Natural killer cell (primary cell): ENCODE measurements at regions of chr9 and their contacts with region 1.

Region 1: GRCh38 chr9:131678499-131679111 is 61.3 kb downstream of the RAPGEF1 start:
- DNase-seq: peak; percentile 75 to 83
- ATAC-seq: peak; percentile 93 to 97 (median 97)
- H3K4me3 ChIP-seq: no peak overlapping the region
- H3K4me3 Mint-ChIP-seq: peak overlapping the region; percentile 86
- H3K27ac ChIP-seq: peak overlapping the region; percentile 89
- H3K27ac Mint-ChIP-seq: peak overlapping the region; percentile 99 to 100
- H3K4me1 ChIP-seq: peaks cover 54% of the 10 kb centered on the region
- H3K4me1 Mint-ChIP-seq: peaks cover 83 to 93% of the 10 kb centered on the region in 2 donors
- H3K27me3 ChIP-seq: no peaks in the 10 kb centered on the region
- H3K27me3 Mint-ChIP-seq: no peaks in the 10 kb centered on the region
- CTCF ChIP-seq: no peak

Region 2: GRCh38 chr9:130718562-130718961 is 960.0 kb before region 1 on chr9:
- intact Hi-C with region 1: no loop called
- DNase-seq: no peak
- ATAC-seq: no peak
- H3K4me3 ChIP-seq: no peak overlapping the region
- H3K4me3 Mint-ChIP-seq: no peak overlapping the region
- H3K27ac ChIP-seq: no peak overlapping the region
- H3K27ac Mint-ChIP-seq: no peak overlapping the region
- H3K4me1 ChIP-seq: peaks cover 8% of the 10 kb centered on the region
- H3K4me1 Mint-ChIP-seq: peaks cover 36 to 43% of the 10 kb centered on the region in 2 donors
- H3K27me3 ChIP-seq: no peaks in the 10 kb centered on the region
- H3K27me3 Mint-ChIP-seq: no peaks in the 10 kb centered on the region
- CTCF ChIP-seq: no peak

Region 3: GRCh38 chr9:131590908-131591844 is 87.4 kb before region 1 on chr9:
- intact Hi-C with region 1: loop called (anchors 5 kb)
- DNase-seq: peak; percentile 79 to 88
- ATAC-seq: peak; percentile 92 to 96 (median 94)
- H3K4me3 ChIP-seq: no peak overlapping the region
- H3K4me3 Mint-ChIP-seq: peak overlapping the region; percentile 63
- H3K27ac ChIP-seq: peak overlapping the region; percentile 21
- H3K27ac Mint-ChIP-seq: peak overlapping the region; percentile 81 to 89
- H3K4me1 ChIP-seq: peaks cover 23% of the 10 kb centered on the region
- H3K4me1 Mint-ChIP-seq: peaks cover 33 to 41% of the 10 kb centered on the region in 2 donors
- H3K27me3 ChIP-seq: no peaks in the 10 kb centered on the region
- H3K27me3 Mint-ChIP-seq: no peaks in the 10 kb centered on the region
- CTCF ChIP-seq: peak; percentile 90

Region 4: DNA sequence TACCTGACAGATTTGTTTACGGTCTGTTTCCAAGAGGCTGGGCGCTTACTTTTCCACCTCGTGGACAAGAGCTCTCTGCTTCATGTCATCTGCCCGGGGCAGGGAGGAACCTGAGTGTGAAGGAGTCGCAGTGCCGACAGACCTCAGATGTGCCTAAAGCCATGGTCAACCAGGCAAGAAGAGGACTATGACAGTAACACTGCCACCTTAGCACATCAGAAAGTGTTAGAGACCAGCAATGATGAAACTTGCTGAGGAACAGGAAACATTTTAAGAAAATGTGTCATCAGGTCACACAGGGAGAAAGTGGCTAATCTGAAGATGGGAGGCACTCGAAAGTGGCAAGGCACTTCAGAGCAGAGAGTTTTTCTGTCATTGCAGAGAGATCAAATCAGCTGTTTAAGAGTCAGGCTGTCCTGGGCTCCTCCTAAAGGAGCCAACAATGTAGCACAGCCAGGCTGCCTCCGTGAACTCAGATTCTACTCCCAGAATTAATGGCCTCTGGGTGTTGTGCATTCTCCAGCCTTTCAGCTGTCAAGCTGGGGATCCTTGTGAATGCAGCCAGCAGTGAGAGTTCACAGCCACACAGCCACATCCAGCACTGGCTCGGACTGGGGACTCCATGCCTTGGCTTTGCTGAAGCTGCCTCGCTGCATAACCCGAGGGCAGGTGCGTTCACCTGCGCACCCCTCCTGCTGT is 33.4 kb before region 1 on chr9:
- intact Hi-C with region 1: loop called (anchors 2 kb)
- DNase-seq: peak; percentile 42 to 47
- ATAC-seq: peak; percentile 83 to 87 (median 86)
- H3K4me3 ChIP-seq: no peak overlapping the region
- H3K4me3 Mint-ChIP-seq: peak overlapping the region; percentile 61
- H3K27ac ChIP-seq: peak overlapping the region; percentile 30
- H3K27ac Mint-ChIP-seq: peak overlapping the region; percentile 82 to 91
- H3K4me1 ChIP-seq: peaks cover 31% of the 10 kb centered on the region
- H3K4me1 Mint-ChIP-seq: peaks cover 44 to 52% of the 10 kb centered on the region in 2 donors
- H3K27me3 ChIP-seq: no peaks in the 10 kb centered on the region
- H3K27me3 Mint-ChIP-seq: no peaks in the 10 kb centered on the region
- CTCF ChIP-seq: no peak

Region 5: GRCh38 chr9:131733541-131734061 is 55.0 kb after region 1 on chr9:
- intact Hi-C with region 1: loop called (anchors 1 kb)
- DNase-seq: peak; percentile 52 to 75
- ATAC-seq: peak in 2 of 3 donors; percentile 6 to 21
- H3K4me3 ChIP-seq: peak overlapping the region; percentile 4
- H3K4me3 Mint-ChIP-seq: peak overlapping the region; percentile 82
- H3K27ac ChIP-seq: peak overlapping the region; percentile 93
- H3K27ac Mint-ChIP-seq: peak overlapping the region; percentile 92 to 95
- H3K4me1 ChIP-seq: peaks cover 99% of the 10 kb centered on the region
- H3K4me1 Mint-ChIP-seq: peaks cover 84 to 87% of the 10 kb centered on the region in 2 donors
- H3K27me3 ChIP-seq: no peaks in the 10 kb centered on the region
- H3K27me3 Mint-ChIP-seq: no peaks in the 10 kb centered on the region
- CTCF ChIP-seq: no peak

Region 6: DNA sequence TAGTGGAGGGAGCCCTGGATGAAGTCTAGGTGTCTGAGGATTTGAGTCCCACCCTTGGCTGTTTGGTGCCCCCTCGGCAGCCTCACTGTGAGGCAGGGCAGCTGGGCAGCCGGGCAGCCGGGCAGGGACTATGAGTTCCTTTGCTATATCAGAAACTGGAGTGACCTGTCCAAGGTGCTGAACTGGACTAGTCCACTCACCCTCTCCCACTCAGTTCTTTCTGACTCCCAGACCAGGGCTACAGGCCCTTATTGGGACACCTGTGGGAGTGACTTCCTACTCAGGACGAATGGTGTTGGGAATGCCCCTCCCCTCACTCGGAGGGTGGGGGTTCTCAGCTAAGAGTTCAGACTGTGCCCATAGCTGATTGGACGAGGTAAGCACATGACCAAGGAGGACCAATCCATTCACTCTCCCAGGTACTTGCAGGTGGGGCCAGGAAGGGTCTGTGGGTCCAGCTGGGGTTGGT is 95.3 kb after region 1 on chr9:
- intact Hi-C with region 1: no loop called
- DNase-seq: peak; percentile 17 to 56
- ATAC-seq: peak in 1 of 3 donors; percentile 48
- H3K4me3 ChIP-seq: no peak overlapping the region
- H3K4me3 Mint-ChIP-seq: no peak overlapping the region
- H3K27ac ChIP-seq: no peak overlapping the region
- H3K27ac Mint-ChIP-seq: no peak overlapping the region
- H3K4me1 ChIP-seq: no peaks in the 10 kb centered on the region
- H3K4me1 Mint-ChIP-seq: no peaks in the 10 kb centered on the region
- H3K27me3 ChIP-seq: no peaks in the 10 kb centered on the region
- H3K27me3 Mint-ChIP-seq: peaks cover 11 to 18% of the 10 kb centered on the region in 2 donors
- CTCF ChIP-seq: no peak